ENCODE measurements at regions of chr2 and their contacts with region 1.

Region 1: GRCh38 chr2:191582355-191582754 is 95.6 kb upstream of the NABP1 start:
- DNase-seq: no peak
- ATAC-seq: no peak
- H3K4me3 ChIP-seq: no peak overlapping the region
- H3K4me3 Mint-ChIP-seq: no peak overlapping the region
- H3K27ac ChIP-seq: no peak overlapping the region
- H3K27ac Mint-ChIP-seq: no peak overlapping the region
- H3K4me1 ChIP-seq: no peaks in the 10 kb centered on the region
- H3K4me1 Mint-ChIP-seq: no peaks in the 10 kb centered on the region
- H3K27me3 ChIP-seq: no peaks in the 10 kb centered on the region
- H3K27me3 Mint-ChIP-seq: peaks cover 0 to 23% (median 0%) of the 10 kb centered on the region in 5 donors

Region 2: DNA sequence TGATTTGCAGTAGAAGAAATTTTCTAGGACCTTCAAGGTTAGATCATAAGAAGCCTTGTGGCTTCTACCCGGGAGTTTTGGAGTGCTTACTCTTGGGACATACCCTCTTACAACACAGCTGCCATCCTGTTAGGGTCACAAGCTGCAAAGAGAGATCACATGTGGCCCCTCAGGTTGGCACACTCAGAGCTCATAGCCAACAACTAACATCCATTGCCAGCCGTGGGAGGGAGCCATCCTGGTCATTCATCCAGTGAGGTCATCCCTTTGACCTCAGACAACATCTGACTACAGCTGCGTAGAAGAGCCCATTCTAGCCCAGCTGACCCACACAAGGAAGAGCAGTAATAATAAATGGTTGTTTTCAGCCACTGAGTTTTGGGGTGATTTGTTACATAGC is 18.7 kb after region 1 on chr2:
- CTCF ChIA-PET with region 1: no interaction called
- POLR2A ChIA-PET with region 1: no interaction called
- intact Hi-C with region 1: loop called in 1 of 2 experiments (anchors 2 kb)
- DNase-seq: no peak
- ATAC-seq: peak; percentile 36
- H3K4me3 ChIP-seq: no peak overlapping the region
- H3K4me3 Mint-ChIP-seq: no peak overlapping the region
- H3K27ac ChIP-seq: no peak overlapping the region
- H3K27ac Mint-ChIP-seq: no peak overlapping the region
- H3K4me1 ChIP-seq: no peaks in the 10 kb centered on the region
- H3K4me1 Mint-ChIP-seq: peaks cover 0 to 1% (median 0%) of the 10 kb centered on the region in 7 donors
- H3K27me3 ChIP-seq: no peaks in the 10 kb centered on the region
- H3K27me3 Mint-ChIP-seq: peaks cover 0 to 30% (median 0%) of the 10 kb centered on the region in 5 donors

Region 3: DNA sequence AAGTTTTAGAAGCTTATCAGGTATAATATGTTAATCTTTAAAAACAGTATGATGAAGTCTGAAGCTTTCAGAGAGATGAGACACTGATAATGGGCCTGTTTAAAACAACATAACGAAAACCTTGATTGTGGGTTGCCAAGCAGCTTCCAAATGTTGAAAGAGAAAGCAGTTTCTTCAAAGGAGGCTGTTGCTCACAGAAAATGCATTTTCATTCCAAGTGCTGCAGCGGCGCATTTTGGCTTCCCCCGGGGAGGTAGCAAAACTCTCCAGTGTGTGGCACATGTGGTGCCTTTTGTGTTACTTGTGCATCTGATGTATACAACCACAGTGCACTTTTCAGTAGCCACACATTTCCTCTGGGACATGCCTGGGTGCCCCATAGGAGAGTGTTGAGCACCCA is 546.3 kb after region 1 on chr2:
- CTCF ChIA-PET with region 1: no interaction called
- POLR2A ChIA-PET with region 1: no interaction called
- intact Hi-C with region 1: no loop called
- DNase-seq: no peak
- ATAC-seq: no peak
- H3K4me3 ChIP-seq: no peak overlapping the region
- H3K4me3 Mint-ChIP-seq: no peak overlapping the region
- H3K27ac ChIP-seq: no peak overlapping the region
- H3K27ac Mint-ChIP-seq: no peak overlapping the region
- H3K4me1 ChIP-seq: no peaks in the 10 kb centered on the region
- H3K4me1 Mint-ChIP-seq: no peaks in the 10 kb centered on the region
- H3K27me3 ChIP-seq: no peaks in the 10 kb centered on the region
- H3K27me3 Mint-ChIP-seq: peaks cover 0 to 19% (median 5%) of the 10 kb centered on the region in 5 donors

Measured in naive thymus-derived CD4-positive, alpha-beta T cell (primary cell).